K562 (cell line): ENCODE measurements at regions of chr6 and their contacts with region 1.

Region 1: GRCh38 chr6:20092071-20092566 is 120.2 kb downstream of the MBOAT1 start:
- DNase-seq: peak; percentile 39 to 69 (median 44)
- ATAC-seq: peak; percentile 66
- H3K4me3 ChIP-seq: no peak overlapping the region
- H3K27ac ChIP-seq: no peak overlapping the region
- H3K4me1 ChIP-seq: no peaks in the 10 kb centered on the region
- H3K27me3 ChIP-seq: no peaks in the 10 kb centered on the region
- CTCF ChIP-seq: peak; percentile 59 to 85 (median 69); a peak in 5 of 6 replicates
- EP300 ChIP-seq: no peak
- POLR2A ChIP-seq: no peak
- RAD21 ChIP-seq: peak; percentile 83 to 95

Region 2: GRCh38 chr6:20126789-20127653 is 34.9 kb after region 1 on chr6:
- CTCF ChIA-PET with region 1: interaction called, 3 read pairs
- POLR2A ChIA-PET with region 1: interaction called, 4 read pairs
- in situ Hi-C with region 1: no loop called
- intact Hi-C with region 1: loop called (anchors 1 kb)
- DNase-seq: peak; percentile 83 to 87 (median 86)
- ATAC-seq: peak; percentile 99
- H3K4me3 ChIP-seq: no peak overlapping the region
- H3K27ac ChIP-seq: no peak overlapping the region
- H3K4me1 ChIP-seq: peaks cover 0 to 7% of the 10 kb centered on the region in 2 experiments; a peak in 2 of 5 replicates
- H3K27me3 ChIP-seq: no peaks in the 10 kb centered on the region
- CTCF ChIP-seq: peak; percentile 93 to 99 (median 95)
- EP300 ChIP-seq: no peak
- POLR2A ChIP-seq: no peak
- RAD21 ChIP-seq: peak; percentile 58 to 79

Region 3: GRCh38 chr6:20234136-20234535 is 142.0 kb after region 1 on chr6:
- CTCF ChIA-PET with region 1: no interaction called
- POLR2A ChIA-PET with region 1: no interaction called
- in situ Hi-C with region 1: no loop called
- intact Hi-C with region 1: no loop called
- DNase-seq: no peak
- ATAC-seq: no peak
- H3K4me3 ChIP-seq: no peak overlapping the region
- H3K27ac ChIP-seq: no peak overlapping the region
- H3K4me1 ChIP-seq: peaks cover 0 to 9% of the 10 kb centered on the region in 2 experiments; a peak in 3 of 5 replicates
- H3K27me3 ChIP-seq: no peaks in the 10 kb centered on the region
- CTCF ChIP-seq: no peak
- EP300 ChIP-seq: no peak
- POLR2A ChIP-seq: no peak
- RAD21 ChIP-seq: no peak

Region 4: GRCh38 chr6:20534295-20535262 is 442.5 kb after region 1 on chr6 and contains the start of gene CDKAL1:
- CTCF ChIA-PET with region 1: interaction called, 16 read pairs
- POLR2A ChIA-PET with region 1: no interaction called
- in situ Hi-C with region 1: loop called (anchors 10 kb)
- intact Hi-C with region 1: no loop called
- DNase-seq: peak; percentile 81 to 98 (median 86)
- ATAC-seq: peak; percentile 91
- H3K4me3 ChIP-seq: peak within 1 kb of the TSS; percentile 88
- H3K27ac ChIP-seq: peak within 1 kb of the TSS; percentile 93
- H3K4me1 ChIP-seq: peaks cover 7 to 16% of the 10 kb centered on the region in 2 experiments; a peak in 3 of 5 replicates
- H3K27me3 ChIP-seq: no peaks in the 10 kb centered on the region
- CTCF ChIP-seq: no peak
- EP300 ChIP-seq: peak; percentile 46; the same call in 1 of the 2 replicates
- POLR2A ChIP-seq: peak; percentile 93
- RAD21 ChIP-seq: no peak
- polyA plus RNA-seq, gene CDKAL1: 15.5 to 16.4 TPM

Region 5: GRCh38 chr6:21593412-21593926 is 1501.3 kb after region 1 on chr6 and contains the start of gene SOX4:
- CTCF ChIA-PET with region 1: interaction called, 5 read pairs
- POLR2A ChIA-PET with region 1: no interaction called
- in situ Hi-C with region 1: no loop called
- intact Hi-C with region 1: loop called (anchors 10 kb)
- DNase-seq: peak; percentile 17 to 45 (median 34)
- ATAC-seq: peak; percentile 36; the same call in 2 of the 3 replicates
- H3K4me3 ChIP-seq: peak within 1 kb of the TSS; percentile 18
- H3K27ac ChIP-seq: no peak within 1 kb of the TSS
- H3K4me1 ChIP-seq: peaks cover 0 to 32% of the 10 kb centered on the region in 2 experiments; a peak in 2 of 5 replicates
- H3K27me3 ChIP-seq: peaks cover 8 to 21% of the 10 kb centered on the region in 2 experiments; a peak in 3 of 5 replicates
- CTCF ChIP-seq: no peak
- EP300 ChIP-seq: no peak
- POLR2A ChIP-seq: no peak
- RAD21 ChIP-seq: no peak
- polyA plus RNA-seq, gene SOX4: 0.07 to 0.21 TPM